PC-9 (cell line): ENCODE measurements at regions of chr4 and their contacts with region 1.

Region 1: GRCh38 chr4:61628727-61629126 is 428.6 kb downstream of the ADGRL3 start:
- DNase-seq: no peak
- H3K4me3 ChIP-seq: no peak overlapping the region
- H3K27ac ChIP-seq: no peak overlapping the region
- H3K4me1 ChIP-seq: no peaks in the 10 kb centered on the region
- H3K27me3 ChIP-seq: no peaks in the 10 kb centered on the region
- CTCF ChIP-seq: no peak

Region 2: GRCh38 chr4:61070269-61070668 is 558.5 kb before region 1 on chr4:
- CTCF ChIA-PET with region 1: interaction called, 12 read pairs
- POLR2A ChIA-PET with region 1: no interaction called
- intact Hi-C with region 1: no loop called
- DNase-seq: no peak
- H3K4me3 ChIP-seq: no peak overlapping the region
- H3K27ac ChIP-seq: no peak overlapping the region
- H3K4me1 ChIP-seq: no peaks in the 10 kb centered on the region
- H3K27me3 ChIP-seq: no peaks in the 10 kb centered on the region
- CTCF ChIP-seq: no peak